ENCODE measurements at regions of chr12 and their contacts with region 1.

Region 1: GRCh38 chr12:27243804-27244683 is at the start of gene STK38L:
- DNase-seq: peak; percentile 98
- H3K4me3 Mint-ChIP-seq: peak within 1 kb of the TSS; percentile 99
- H3K27ac Mint-ChIP-seq: peak within 1 kb of the TSS; percentile 91
- H3K4me1 Mint-ChIP-seq: peaks cover 38% of the 10 kb centered on the region
- H3K27me3 Mint-ChIP-seq: no peaks in the 10 kb centered on the region
- total RNA-seq, gene STK38L: 19.1 to 25.8 TPM

Region 2: GRCh38 chr12:27024291-27024690 is 219.8 kb before region 1 on chr12:
- CTCF ChIA-PET with region 1: no interaction called
- POLR2A ChIA-PET with region 1: interaction called, 16 read pairs
- DNase-seq: no peak
- H3K4me3 Mint-ChIP-seq: no peak overlapping the region
- H3K27ac Mint-ChIP-seq: no peak overlapping the region
- H3K4me1 Mint-ChIP-seq: peaks cover 36% of the 10 kb centered on the region
- H3K27me3 Mint-ChIP-seq: peaks cover 2% of the 10 kb centered on the region

Region 3: DNA sequence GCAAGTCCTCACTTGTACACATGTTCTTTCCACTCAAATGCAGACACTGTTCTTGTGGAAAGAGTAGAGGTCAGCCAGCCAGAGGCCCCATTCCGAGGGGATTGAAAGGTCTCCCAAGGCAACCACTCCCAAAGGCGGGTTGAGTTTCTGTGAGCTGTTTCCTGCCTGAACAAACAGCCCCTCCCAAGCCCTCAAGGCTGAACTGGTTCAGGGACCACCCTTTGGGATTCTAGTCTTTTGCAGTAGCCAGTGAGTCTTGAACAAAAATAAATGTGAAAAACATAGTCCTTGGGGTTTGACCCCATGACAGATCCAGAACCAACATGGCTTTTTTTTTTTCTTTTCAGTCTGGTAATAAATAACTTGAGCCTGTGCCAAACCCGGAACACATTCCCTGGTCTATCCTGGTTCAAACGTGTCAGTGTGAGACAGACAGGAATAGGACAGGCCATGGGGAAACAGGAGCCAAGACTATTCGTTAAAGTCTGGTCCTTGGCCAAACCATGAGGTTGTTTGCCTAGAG is 17.6 kb before region 1 on chr12:
- CTCF ChIA-PET with region 1: no interaction called
- POLR2A ChIA-PET with region 1: no interaction called
- DNase-seq: no peak
- H3K4me3 Mint-ChIP-seq: no peak overlapping the region
- H3K27ac Mint-ChIP-seq: no peak overlapping the region
- H3K4me1 Mint-ChIP-seq: peaks cover 6% of the 10 kb centered on the region
- H3K27me3 Mint-ChIP-seq: no peaks in the 10 kb centered on the region

Measured in activated CD4-positive, alpha-beta memory T cell treated with anti-CD3 and anti-CD28 coated beads, Interleukin-2, amount 10 ng/mL, durations not matched to agents 7 days and 5 days (primary cell).